Endothelial cell of umbilical vein (primary cell): ENCODE measurements at regions of chr4 and their contacts with region 1.

Region 1: GRCh38 chr4:112604589-112604988 is 32.1 kb downstream of the ZGRF1 start:
- DNase-seq: peak; percentile 69
- H3K4me3 ChIP-seq: no peak overlapping the region
- H3K27ac ChIP-seq: no peak overlapping the region
- H3K4me1 ChIP-seq: no peaks in the 10 kb centered on the region
- H3K27me3 ChIP-seq: no peaks in the 10 kb centered on the region
- CTCF ChIP-seq: peak; percentile 54 to 67
- POLR2A ChIP-seq: no peak

Region 2: GRCh38 chr4:112327965-112328733 is 276.4 kb before region 1 on chr4:
- CTCF ChIA-PET with region 1: interaction called, 80 read pairs
- POLR2A ChIA-PET with region 1: no interaction called
- dilution Hi-C with region 1: no loop called
- intact Hi-C with region 1: loop called (anchors 1 kb)
- DNase-seq: peak; percentile 60
- H3K4me3 ChIP-seq: no peak overlapping the region
- H3K27ac ChIP-seq: no peak overlapping the region
- H3K4me1 ChIP-seq: no peaks in the 10 kb centered on the region
- H3K27me3 ChIP-seq: no peaks in the 10 kb centered on the region
- CTCF ChIP-seq: peak in 1 of 2 donors; percentile 34
- POLR2A ChIP-seq: no peak

Region 3: DNA sequence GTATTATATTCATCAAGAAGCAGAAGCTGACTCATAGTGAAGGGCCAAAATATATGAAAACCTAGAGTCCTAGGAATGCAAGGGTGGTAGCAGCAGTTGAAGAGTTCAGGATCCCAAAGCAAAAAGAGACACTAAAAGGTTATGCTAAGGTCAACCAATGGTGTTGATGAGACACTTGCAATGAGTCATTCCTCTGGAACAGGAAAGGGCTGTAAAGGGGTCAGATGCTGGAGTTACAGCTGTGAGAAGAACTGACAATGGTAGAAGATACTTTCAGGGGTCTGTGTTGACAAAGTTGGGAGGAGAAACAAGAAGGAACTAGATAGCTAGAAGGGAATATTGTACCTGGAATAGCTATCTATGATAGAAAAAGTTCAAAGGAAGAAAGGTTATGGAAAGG is 15.4 kb before region 1 on chr4:
- CTCF ChIA-PET with region 1: interaction called, 15 read pairs
- POLR2A ChIA-PET with region 1: no interaction called
- dilution Hi-C with region 1: no loop called
- intact Hi-C with region 1: no loop called
- DNase-seq: peak; percentile 10
- H3K4me3 ChIP-seq: no peak overlapping the region
- H3K27ac ChIP-seq: no peak overlapping the region
- H3K4me1 ChIP-seq: peaks cover 5% of the 10 kb centered on the region
- H3K27me3 ChIP-seq: no peaks in the 10 kb centered on the region
- CTCF ChIP-seq: no peak
- POLR2A ChIP-seq: no peak

Region 4: DNA sequence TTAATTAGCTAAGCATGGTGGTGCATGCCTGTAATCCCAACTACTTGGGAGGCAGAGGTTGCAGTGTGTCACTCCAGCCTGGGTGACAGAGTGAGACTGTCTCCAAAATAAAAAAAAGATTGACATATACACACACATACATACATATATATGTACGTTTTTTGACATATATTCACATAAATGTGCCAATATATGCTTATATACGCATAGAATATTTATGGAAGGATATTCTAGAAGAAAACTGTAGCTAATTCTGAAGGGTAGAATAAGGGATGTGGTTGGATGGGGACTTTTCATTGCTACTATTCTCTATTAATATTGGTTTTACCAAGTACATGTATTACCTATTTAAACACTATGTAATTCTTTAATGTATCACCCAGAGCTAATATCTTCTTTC is 12.4 kb after region 1 on chr4:
- CTCF ChIA-PET with region 1: interaction called, 10 read pairs
- POLR2A ChIA-PET with region 1: no interaction called
- dilution Hi-C with region 1: no loop called
- intact Hi-C with region 1: no loop called
- DNase-seq: no peak
- H3K4me3 ChIP-seq: no peak overlapping the region
- H3K27ac ChIP-seq: no peak overlapping the region
- H3K4me1 ChIP-seq: no peaks in the 10 kb centered on the region
- H3K27me3 ChIP-seq: no peaks in the 10 kb centered on the region
- CTCF ChIP-seq: no peak
- POLR2A ChIP-seq: no peak